Activated T-helper 1 cell treated with anti-CD3 and anti-CD28 coated beads, Interleukin-12 subunit alpha, Interleukin-12 subunit beta, Interleukin-2, Interleukin-4 antibody, amounts not matched to agents 30 ng/mL and 10 ng/mL and 1 ng/mL, durations not matched to agents 14 hours and 24 hours and 36 hours (primary cell): ENCODE measurements at regions of chr4 and their contacts with region 1.

Region 1: GRCh38 chr4:55395529-55396307 is at the start of gene TMEM165:
- DNase-seq: peak; percentile 88
- H3K4me3 Mint-ChIP-seq: peak within 1 kb of the TSS; percentile 97
- H3K27ac Mint-ChIP-seq: peak within 1 kb of the TSS; percentile 96
- H3K4me1 Mint-ChIP-seq: peaks cover 40% of the 10 kb centered on the region
- H3K27me3 Mint-ChIP-seq: peaks cover 3% of the 10 kb centered on the region
- total RNA-seq, gene TMEM165: 110 and 112 TPM in 2 replicates

Region 2: GRCh38 chr4:55116450-55116849 is 279.3 kb before region 1 on chr4:
- intact Hi-C with region 1: no loop called
- DNase-seq: no peak
- H3K4me3 Mint-ChIP-seq: no peak overlapping the region
- H3K27ac Mint-ChIP-seq: no peak overlapping the region
- H3K4me1 Mint-ChIP-seq: no peaks in the 10 kb centered on the region
- H3K27me3 Mint-ChIP-seq: no peaks in the 10 kb centered on the region

Region 3: DNA sequence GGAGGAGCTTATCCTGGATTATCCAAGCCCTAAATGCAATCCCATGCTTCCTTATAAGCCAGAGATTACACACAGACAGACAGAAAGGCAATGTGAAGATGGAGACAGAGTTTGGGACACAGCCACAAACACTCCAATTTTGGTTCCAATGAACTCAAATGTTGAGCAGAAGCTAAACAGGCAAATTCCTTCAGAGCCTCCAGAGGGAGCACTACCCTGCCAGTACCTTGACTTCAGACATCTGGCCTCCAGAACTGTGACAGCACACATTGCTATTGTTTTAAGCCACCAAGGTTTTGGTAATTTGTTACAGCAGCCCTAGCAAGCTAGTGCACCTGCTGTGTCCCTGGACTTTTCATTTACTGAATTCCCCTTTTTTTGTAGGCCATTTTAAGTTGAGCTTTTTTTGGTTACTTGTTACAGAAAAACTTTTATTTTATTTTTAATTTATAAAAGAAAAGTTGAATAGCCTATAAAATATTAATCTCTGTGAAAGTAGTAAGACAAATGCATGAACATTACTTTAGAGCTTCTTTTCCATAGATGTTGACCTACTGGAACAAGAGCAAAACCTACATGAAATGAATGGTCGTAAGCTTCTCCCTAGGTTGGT is 83.1 kb before region 1 on chr4:
- intact Hi-C with region 1: loop called (anchors 1 kb)
- DNase-seq: peak; percentile 20
- H3K4me3 Mint-ChIP-seq: no peak overlapping the region
- H3K27ac Mint-ChIP-seq: no peak overlapping the region
- H3K4me1 Mint-ChIP-seq: peaks cover 12% of the 10 kb centered on the region
- H3K27me3 Mint-ChIP-seq: peaks cover 3% of the 10 kb centered on the region

Region 4: DNA sequence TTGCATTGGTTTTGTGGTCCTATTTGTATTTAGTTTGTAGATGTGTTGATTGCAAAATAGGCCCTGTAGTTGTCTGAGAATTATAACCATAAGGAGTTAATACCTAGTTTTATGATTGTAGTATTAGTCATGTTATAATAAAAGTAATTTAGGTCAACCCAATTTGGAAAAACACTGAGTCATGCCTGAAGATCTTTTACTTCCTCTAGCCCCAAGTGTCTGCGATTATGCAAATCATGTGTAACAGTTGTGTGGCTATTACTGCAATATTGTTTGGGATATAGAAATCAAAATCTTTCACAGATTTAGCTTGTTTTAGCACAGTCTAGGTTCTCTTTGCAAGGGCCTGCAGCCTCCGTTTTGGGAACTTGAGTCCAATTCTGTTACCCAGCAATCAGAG is 37.0 kb before region 1 on chr4:
- intact Hi-C with region 1: loop called (anchors 2 kb)
- DNase-seq: no peak
- H3K4me3 Mint-ChIP-seq: no peak overlapping the region
- H3K27ac Mint-ChIP-seq: no peak overlapping the region
- H3K4me1 Mint-ChIP-seq: peaks cover 12% of the 10 kb centered on the region
- H3K27me3 Mint-ChIP-seq: no peaks in the 10 kb centered on the region

Region 5: GRCh38 chr4:55435141-55435841 is 39.6 kb after region 1 on chr4:
- intact Hi-C with region 1: loop called (anchors 5 kb)
- DNase-seq: peak; percentile 1
- H3K4me3 Mint-ChIP-seq: no peak overlapping the region
- H3K27ac Mint-ChIP-seq: peak overlapping the region; percentile 7
- H3K4me1 Mint-ChIP-seq: peaks cover 14% of the 10 kb centered on the region
- H3K27me3 Mint-ChIP-seq: no peaks in the 10 kb centered on the region

Region 6: DNA sequence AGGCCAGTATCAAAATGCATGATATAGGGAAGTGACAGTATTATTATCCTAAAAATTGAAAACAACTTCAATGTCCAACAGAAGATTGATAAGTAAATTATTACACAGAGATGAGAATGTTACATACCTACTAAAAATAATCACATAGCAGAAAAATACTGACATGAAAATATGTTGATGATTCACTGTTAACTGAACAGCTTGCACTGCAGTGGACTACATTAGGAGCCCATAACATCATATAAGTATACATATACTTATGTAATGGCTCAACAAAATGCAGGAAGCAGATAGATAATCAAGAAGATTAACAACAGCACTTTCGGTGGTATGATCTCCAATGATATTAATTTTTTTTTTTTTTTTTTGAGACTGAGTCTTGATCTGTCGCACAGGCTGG is 143.9 kb after region 1 on chr4:
- intact Hi-C with region 1: no loop called
- DNase-seq: no peak
- H3K4me3 Mint-ChIP-seq: no peak overlapping the region
- H3K27ac Mint-ChIP-seq: no peak overlapping the region
- H3K4me1 Mint-ChIP-seq: peaks cover 25% of the 10 kb centered on the region
- H3K27me3 Mint-ChIP-seq: no peaks in the 10 kb centered on the region

Region 7: DNA sequence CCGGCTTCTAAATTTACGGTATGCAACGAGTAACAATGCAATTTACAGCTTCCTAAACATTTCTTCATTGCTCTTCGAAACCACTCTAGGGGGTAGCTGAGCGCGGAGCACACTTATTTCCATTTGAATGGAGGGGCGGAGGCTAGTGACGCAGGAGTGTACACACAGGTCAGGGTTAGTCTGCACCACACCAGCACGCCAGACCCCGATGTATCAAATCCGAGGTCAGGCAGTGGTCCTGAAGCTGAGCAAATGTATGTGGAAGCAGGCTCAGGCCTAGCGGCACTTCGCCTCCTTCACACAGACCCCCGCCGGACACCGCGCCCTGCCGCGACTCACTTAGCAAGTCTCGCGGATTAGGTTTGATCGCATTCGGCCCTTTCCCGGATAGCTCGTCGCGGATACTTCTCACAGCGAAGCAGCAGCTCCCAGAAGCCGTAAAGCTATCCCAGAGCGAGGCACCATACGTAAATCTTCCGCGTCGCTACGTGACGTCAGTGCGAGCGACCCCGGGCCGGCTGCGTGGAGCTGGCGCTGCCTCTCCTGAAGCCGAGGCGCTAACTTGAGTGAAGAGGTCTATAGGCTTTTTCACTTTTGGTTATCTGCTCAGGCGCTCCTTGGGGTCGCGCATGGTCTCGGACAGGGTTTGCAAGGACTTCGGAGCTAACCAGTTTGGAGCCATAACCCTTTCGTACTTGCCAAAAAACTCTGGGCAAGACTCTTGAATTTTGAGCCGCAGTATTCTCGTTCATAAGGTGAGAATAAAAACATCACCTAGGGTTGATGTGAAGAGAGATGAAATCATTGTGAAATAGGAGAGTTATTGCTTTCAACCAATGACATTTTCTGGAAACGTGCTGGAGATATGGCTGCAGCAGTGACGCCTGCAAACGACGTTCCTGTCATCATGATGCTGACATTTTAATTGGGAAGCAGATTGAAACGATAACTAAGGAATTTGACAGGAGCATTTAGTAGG is 991.6 kb after region 1 on chr4 and contains the start of gene AASDH:
- intact Hi-C with region 1: loop called (anchors 2 kb)
- DNase-seq: peak; percentile 93
- H3K4me3 Mint-ChIP-seq: peak within 1 kb of the TSS; percentile 92
- H3K27ac Mint-ChIP-seq: peak within 1 kb of the TSS; percentile 97
- H3K4me1 Mint-ChIP-seq: peaks cover 26% of the 10 kb centered on the region
- H3K27me3 Mint-ChIP-seq: no peaks in the 10 kb centered on the region
- total RNA-seq, gene AASDH: 9.8 and 12.0 TPM in 2 replicates

Region 8: GRCh38 chr4:56977321-56978012 is 1581.7 kb after region 1 on chr4 and contains the start of gene NOA1:
- intact Hi-C with region 1: loop called (anchors 5 kb)
- DNase-seq: peak; percentile 98
- H3K4me3 Mint-ChIP-seq: peak within 1 kb of the TSS; percentile 100
- H3K27ac Mint-ChIP-seq: peak within 1 kb of the TSS; percentile 100
- H3K4me1 Mint-ChIP-seq: peaks cover 51% of the 10 kb centered on the region
- H3K27me3 Mint-ChIP-seq: no peaks in the 10 kb centered on the region
- total RNA-seq, gene NOA1: 17.7 and 18.3 TPM in 2 replicates